Activated B cell treated with CpG ODN at 0.5 μM for 24 hours (primary cell): ENCODE measurements at regions of chr6 and their contacts with region 1.

Region 1: DNA sequence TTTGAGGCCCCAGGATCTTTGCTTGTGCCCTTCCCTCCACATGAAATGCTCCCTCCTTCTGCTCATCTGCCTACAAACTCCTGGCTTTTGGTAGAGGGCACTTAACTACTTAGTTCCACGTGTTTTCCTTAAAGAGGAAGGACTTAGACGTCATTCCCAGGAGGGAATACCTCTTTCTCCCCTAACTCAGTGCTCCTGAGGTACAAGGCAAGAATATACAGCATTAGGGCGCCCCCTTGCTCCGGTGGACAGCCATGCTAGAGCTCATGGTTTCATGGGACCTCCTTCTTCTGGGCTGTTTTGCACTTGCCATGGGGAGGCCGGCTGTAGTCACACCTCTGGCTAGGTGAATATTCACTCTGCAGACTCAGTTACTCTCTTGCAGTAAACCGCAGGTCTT is 93.8 kb upstream of the LY86 start:
- DNase-seq: peak; percentile 34
- ATAC-seq: peak; percentile 49
- H3K4me3 Mint-ChIP-seq: no peak overlapping the region
- H3K27ac Mint-ChIP-seq: peak overlapping the region; percentile 53
- H3K4me1 Mint-ChIP-seq: no peaks in the 10 kb centered on the region
- H3K27me3 Mint-ChIP-seq: peaks cover 2% of the 10 kb centered on the region
- CTCF ChIP-seq: no peak

Region 2: GRCh38 chr6:5471044-5471443 is 1023.6 kb before region 1 on chr6:
- CTCF ChIA-PET with region 1: interaction called, 4 read pairs
- POLR2A ChIA-PET with region 1: no interaction called
- intact Hi-C with region 1: loop called (anchors 1 kb)
- DNase-seq: peak; percentile 24
- ATAC-seq: peak; percentile 70
- H3K4me3 Mint-ChIP-seq: no peak overlapping the region
- H3K27ac Mint-ChIP-seq: no peak overlapping the region
- H3K4me1 Mint-ChIP-seq: no peaks in the 10 kb centered on the region
- H3K27me3 Mint-ChIP-seq: no peaks in the 10 kb centered on the region
- CTCF ChIP-seq: no peak

Region 3: GRCh38 chr6:6105472-6106036 is 389.1 kb before region 1 on chr6:
- CTCF ChIA-PET with region 1: interaction called, 9 read pairs
- POLR2A ChIA-PET with region 1: interaction called, 5 read pairs
- intact Hi-C with region 1: loop called (anchors 1 kb)
- DNase-seq: no peak
- ATAC-seq: peak; percentile 31
- H3K4me3 Mint-ChIP-seq: no peak overlapping the region
- H3K27ac Mint-ChIP-seq: no peak overlapping the region
- H3K4me1 Mint-ChIP-seq: no peaks in the 10 kb centered on the region
- H3K27me3 Mint-ChIP-seq: peaks cover 35% of the 10 kb centered on the region
- CTCF ChIP-seq: no peak

Region 4: GRCh38 chr6:6315660-6316059 is 179.0 kb before region 1 on chr6:
- CTCF ChIA-PET with region 1: interaction called, 4 read pairs
- POLR2A ChIA-PET with region 1: no interaction called
- intact Hi-C with region 1: loop called (anchors 2 kb)
- DNase-seq: no peak
- ATAC-seq: peak; percentile 35
- H3K4me3 Mint-ChIP-seq: no peak overlapping the region
- H3K27ac Mint-ChIP-seq: no peak overlapping the region
- H3K4me1 Mint-ChIP-seq: peaks cover 19% of the 10 kb centered on the region
- H3K27me3 Mint-ChIP-seq: peaks cover 29% of the 10 kb centered on the region
- CTCF ChIP-seq: peak; percentile 63

Region 5: DNA sequence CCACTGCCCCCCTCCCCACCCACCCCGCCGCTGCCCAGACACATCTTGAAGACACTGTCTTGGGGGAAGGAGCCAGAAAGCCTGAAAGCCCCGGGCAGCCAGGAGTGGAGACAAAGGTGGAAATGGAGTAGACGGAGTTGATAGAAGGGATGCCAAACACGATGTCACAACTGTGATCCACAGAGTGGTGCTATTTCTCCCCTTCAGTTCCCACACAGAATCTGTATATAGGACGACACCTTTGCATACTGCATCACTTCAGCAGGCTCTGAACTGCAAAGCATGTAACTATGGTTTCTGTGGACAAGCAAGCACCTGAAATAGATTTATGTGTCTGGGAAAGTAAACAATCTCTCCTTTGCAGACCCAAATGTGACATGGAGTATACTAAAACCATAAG is 117.8 kb before region 1 on chr6:
- CTCF ChIA-PET with region 1: interaction called, 7 read pairs
- POLR2A ChIA-PET with region 1: no interaction called
- intact Hi-C with region 1: loop called (anchors 1 kb)
- DNase-seq: no peak
- ATAC-seq: peak; percentile 34
- H3K4me3 Mint-ChIP-seq: no peak overlapping the region
- H3K27ac Mint-ChIP-seq: no peak overlapping the region
- H3K4me1 Mint-ChIP-seq: peaks cover 4% of the 10 kb centered on the region
- H3K27me3 Mint-ChIP-seq: no peaks in the 10 kb centered on the region
- CTCF ChIP-seq: no peak

Region 6: DNA sequence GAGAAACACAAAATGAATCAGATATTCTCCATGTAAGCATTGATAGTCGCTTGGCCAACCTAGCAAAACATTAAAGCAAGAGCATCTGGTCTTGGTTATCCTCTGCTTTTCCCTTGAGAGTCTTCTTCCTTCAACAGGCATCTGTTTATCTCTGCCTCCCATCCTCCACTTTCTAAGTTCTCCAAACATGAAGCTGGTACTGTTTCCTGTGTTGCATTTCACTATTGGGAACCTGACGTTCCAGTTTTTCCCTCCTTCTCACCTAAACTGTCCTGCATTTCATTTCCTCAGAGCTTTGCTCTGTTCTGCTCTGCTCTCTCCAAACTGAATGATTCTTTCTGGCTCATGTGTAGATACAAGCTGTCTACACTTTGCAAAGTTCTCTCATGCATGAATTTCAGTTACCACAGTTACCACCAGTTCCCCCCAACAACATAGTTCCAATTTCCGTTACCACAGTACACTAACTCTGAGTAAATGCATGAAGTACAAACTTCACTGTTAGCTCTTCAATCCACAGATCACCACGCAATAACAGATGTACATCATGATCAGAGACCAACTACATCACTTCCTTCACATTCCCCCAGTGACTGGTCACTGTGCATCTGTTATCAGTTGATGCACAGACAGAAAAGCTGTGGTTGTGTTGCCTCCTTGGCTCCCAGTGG is 87.5 kb before region 1 on chr6:
- CTCF ChIA-PET with region 1: interaction called, 6 read pairs
- POLR2A ChIA-PET with region 1: interaction called, 3 read pairs
- intact Hi-C with region 1: loop called (anchors 1 kb)
- DNase-seq: no peak
- ATAC-seq: peak; percentile 79
- H3K4me3 Mint-ChIP-seq: no peak overlapping the region
- H3K27ac Mint-ChIP-seq: no peak overlapping the region
- H3K4me1 Mint-ChIP-seq: peaks cover 13% of the 10 kb centered on the region
- H3K27me3 Mint-ChIP-seq: peaks cover 16% of the 10 kb centered on the region
- CTCF ChIP-seq: no peak